Stomach (tissue), 19 donors: ENCODE measurements at regions of chr3 and their contacts with region 1.

Region 1: GRCh38 chr3:51799879-51800749 is 21.1 kb upstream of the IQCF6 start:
- DNase-seq: peak in 1 of 2 donors; percentile 74
- H3K4me3 ChIP-seq: no peak overlapping the region
- H3K27ac ChIP-seq: no peak overlapping the region
- H3K4me1 ChIP-seq: peaks cover 0 to 4% (median 0%) of the 10 kb centered on the region in 4 donors
- H3K27me3 ChIP-seq: peaks cover 0 to 16% (median 0%) of the 10 kb centered on the region in 3 donors
- CTCF ChIP-seq: peak in 5 of 7 experiments; percentile 60 to 71 (median 65)
- EP300 ChIP-seq: no peak
- POLR2A ChIP-seq: no peak

Region 2: GRCh38 chr3:51718547-51719409 is 81.3 kb before region 1 on chr3:
- intact Hi-C with region 1: loop called (anchors 5 kb)
- DNase-seq: peak; percentile 73 to 81
- H3K4me3 ChIP-seq: no peak overlapping the region
- H3K27ac ChIP-seq: no peak overlapping the region
- H3K4me1 ChIP-seq: peaks cover 0 to 6% (median 2%) of the 10 kb centered on the region in 4 donors
- H3K27me3 ChIP-seq: peaks cover 0 to 10% (median 0%) of the 10 kb centered on the region in 3 donors
- CTCF ChIP-seq: peak in 5 of 7 experiments; percentile 26 to 75 (median 66)
- EP300 ChIP-seq: no peak
- POLR2A ChIP-seq: no peak

Region 3: GRCh38 chr3:51916418-51916817 is 116.3 kb after region 1 on chr3:
- intact Hi-C with region 1: no loop called
- DNase-seq: no peak
- H3K4me3 ChIP-seq: no peak overlapping the region
- H3K27ac ChIP-seq: no peak overlapping the region
- H3K4me1 ChIP-seq: no peaks in the 10 kb centered on the region
- H3K27me3 ChIP-seq: peaks cover 0 to 6% (median 0%) of the 10 kb centered on the region in 3 donors
- CTCF ChIP-seq: no peak
- EP300 ChIP-seq: no peak
- POLR2A ChIP-seq: no peak